Body of pancreas (tissue), 4 donors: ENCODE measurements at regions of chr14 and their contacts with region 1.

Region 1: GRCh38 chr14:105045710-105046326 is 19.4 kb downstream of the GPR132 start:
- DNase-seq: peak; percentile 87 to 91 (median 90)
- ATAC-seq: peak; percentile 90
- H3K4me3 ChIP-seq: no peak overlapping the region
- H3K27ac ChIP-seq: no peak overlapping the region
- H3K4me1 ChIP-seq: peaks cover 16% of the 10 kb centered on the region
- H3K27me3 ChIP-seq: no peaks in the 10 kb centered on the region
- CTCF ChIP-seq: peak; percentile 98 to 100 (median 100)
- POLR2A ChIP-seq: no peak

Region 2: DNA sequence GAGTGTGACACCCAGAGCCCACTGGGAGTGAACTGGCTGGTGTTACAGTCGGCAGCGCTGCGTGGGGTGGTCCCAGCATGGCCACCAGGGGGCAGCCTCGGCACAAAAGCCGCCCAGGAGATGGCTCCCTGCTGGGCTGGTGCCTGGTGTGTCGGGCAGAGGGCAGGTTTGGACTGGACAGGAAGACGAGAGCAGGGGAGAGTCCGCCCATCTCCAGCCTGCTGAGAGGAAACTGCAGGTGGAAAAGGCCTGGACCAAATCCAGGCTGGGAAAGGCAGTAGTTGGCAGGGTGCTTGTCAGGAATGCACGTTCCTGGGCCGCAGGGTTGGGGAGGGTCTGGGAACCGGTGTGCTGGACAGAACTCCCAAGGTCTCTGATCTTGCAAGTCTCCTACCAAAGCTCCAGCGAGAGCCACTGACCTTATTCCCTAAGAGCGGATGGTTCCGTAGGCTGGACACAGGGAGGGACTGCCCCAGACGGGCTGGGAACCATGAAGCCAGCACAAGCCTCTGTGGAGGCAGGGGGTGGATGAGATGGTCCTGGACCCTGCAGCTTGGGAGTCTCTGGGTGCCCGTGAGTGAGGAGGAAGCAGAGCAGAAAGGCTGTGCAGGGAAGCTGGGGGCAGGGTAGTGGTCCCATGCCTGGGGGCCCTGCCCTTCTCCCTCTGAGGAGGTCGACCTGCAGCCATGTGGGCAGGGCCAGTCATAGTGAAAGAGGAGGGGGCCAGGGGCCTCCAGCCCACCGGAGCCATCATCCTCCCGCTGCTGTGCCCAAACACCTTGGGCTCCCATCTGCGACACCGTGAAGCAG is 69.4 kb before region 1 on chr14:
- intact Hi-C with region 1: loop called (anchors 5 kb)
- DNase-seq: peak; percentile 86 to 90 (median 88)
- ATAC-seq: peak; percentile 67
- H3K4me3 ChIP-seq: no peak overlapping the region
- H3K27ac ChIP-seq: no peak overlapping the region
- H3K4me1 ChIP-seq: peaks cover 89% of the 10 kb centered on the region
- H3K27me3 ChIP-seq: no peaks in the 10 kb centered on the region
- CTCF ChIP-seq: peak; percentile 87 to 97 (median 95)
- POLR2A ChIP-seq: no peak

Region 3: DNA sequence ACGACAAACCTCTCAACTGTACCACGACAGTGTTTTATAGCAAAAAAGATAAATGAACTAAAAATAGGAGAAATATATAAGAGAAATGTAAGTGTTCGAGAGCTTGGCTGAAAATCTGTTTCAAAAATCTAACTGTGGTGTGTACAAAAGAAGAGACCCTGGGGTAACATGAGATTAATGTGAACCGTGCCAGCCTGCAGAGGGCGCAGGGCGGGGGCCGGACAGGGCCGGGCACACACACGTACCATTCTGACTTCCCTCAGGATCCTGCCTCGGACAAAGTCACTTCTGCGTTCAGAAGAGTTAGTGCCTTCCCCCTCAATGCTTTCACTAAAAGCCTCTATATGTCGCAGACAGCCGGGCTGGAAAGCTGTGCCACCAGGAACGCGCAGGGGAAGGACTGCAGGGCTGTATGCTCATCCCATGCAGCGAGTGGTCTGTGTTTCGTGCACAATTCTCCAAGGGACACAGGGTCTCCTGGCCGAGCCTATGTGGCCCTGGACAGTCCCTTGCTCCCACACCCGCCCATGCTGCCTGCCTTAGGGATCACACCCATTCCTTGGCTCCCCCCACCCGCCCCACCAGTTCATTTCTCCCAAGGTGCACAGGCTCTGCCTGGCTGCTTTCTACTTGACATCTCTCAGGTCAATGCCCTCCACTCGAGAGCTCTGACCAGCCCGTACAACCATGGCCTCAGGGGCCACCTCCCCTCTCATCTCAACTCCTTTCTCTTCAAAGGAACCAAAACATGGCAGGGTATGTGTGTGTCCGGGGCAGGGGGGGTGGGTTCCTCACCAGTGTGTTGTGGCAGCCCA is 33.4 kb before region 1 on chr14:
- intact Hi-C with region 1: no loop called
- DNase-seq: peak in 1 of 4 donors; percentile 30
- ATAC-seq: peak; percentile 49
- H3K4me3 ChIP-seq: no peak overlapping the region
- H3K27ac ChIP-seq: no peak overlapping the region
- H3K4me1 ChIP-seq: no peaks in the 10 kb centered on the region
- H3K27me3 ChIP-seq: no peaks in the 10 kb centered on the region
- CTCF ChIP-seq: peak in 2 of 7 experiments; percentile 30 to 32
- POLR2A ChIP-seq: no peak